OCI-LY7 (cell line): ENCODE measurements at regions of chr2 and their contacts with region 1.

Region 1: DNA sequence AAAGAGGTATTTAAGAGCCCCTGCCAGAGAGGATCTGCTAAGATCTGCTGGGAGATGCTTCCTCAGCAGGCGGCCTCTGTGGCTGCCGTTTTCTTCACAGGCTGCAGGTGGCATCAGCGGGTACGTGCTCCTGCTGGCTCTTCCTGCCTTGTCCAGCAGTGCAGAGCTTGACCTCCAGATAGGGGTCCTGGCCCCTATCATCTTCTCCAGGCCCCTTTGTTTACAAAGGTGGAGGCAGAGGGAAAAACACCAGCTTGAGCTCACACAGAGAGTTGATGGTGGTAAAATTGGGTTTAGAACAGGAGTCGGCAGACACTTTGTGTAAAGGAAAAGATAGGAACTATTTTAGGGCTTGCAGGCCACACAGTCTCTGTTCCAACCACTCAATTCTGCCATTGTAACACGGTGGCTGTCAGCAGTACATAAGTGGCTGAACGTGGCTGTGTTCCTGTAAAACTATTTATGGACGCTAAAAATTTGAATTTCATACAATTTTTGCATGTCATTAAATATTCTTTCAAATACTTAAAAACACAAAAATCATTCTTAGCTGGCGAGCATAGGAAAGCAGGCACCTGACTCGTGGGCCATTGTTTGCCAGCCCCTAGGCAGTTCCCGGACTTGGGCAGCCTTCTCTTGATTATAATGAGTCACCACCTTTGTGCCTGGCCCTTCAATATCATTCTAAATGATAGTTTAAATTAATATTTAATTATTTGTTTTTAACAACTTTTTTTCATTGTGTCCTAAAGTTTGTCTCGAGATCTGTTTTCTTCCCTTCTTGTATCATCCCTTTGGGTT is 98.2 kb upstream of the B3GNT7 start:
- DNase-seq: peak; percentile 82
- H3K4me3 ChIP-seq: peak overlapping the region; percentile 35
- H3K27ac ChIP-seq: no peak overlapping the region
- H3K4me1 ChIP-seq: peaks cover 36% of the 10 kb centered on the region
- CTCF ChIP-seq: peak; percentile 89

Region 2: DNA sequence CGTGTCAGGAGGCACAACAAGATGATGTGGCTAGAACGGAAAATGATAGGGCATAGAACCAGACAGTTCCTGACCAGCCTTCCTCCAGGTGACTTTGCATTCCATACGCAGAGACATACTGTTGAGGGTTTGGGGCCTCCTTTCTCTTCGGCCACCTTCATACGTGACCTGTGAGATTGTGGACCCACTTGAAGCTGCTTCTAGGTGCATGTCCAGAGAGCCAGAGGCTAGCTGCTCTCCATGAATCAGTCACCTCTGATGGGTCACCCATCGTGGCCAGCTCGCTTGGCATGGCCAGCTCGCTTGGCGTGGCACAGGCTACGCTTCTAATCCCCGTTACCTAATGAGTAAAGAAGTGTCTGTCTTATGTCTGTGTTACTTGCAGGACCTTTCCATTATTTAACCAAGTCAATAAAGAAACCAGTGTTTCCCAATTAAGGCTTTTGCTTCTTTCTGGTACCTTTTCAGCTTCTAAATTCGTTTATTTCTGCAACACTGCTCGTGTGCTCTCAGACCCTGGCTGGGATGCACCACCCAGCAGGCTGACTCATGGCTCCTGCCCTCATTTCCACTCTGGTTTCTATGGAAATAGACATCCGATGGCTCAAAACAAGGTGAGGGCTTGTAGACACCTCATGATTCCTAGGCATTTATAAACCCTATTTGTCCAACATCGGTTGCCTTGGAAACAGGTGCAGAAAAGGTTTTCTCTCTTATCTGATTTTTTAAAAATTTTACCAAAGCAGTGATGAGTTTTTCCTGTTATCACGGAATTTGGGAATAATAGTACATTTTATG is 11.5 kb after region 1 on chr2:
- CTCF ChIA-PET with region 1: no interaction called
- POLR2A ChIA-PET with region 1: interaction called, 4 read pairs
- intact Hi-C with region 1: loop called (anchors 2 kb)
- DNase-seq: no peak
- H3K4me3 ChIP-seq: no peak overlapping the region
- H3K27ac ChIP-seq: no peak overlapping the region
- H3K4me1 ChIP-seq: peaks cover 31% of the 10 kb centered on the region
- CTCF ChIP-seq: no peak

Region 3: GRCh38 chr2:231399853-231400680 is 102.8 kb after region 1 on chr2:
- CTCF ChIA-PET with region 1: interaction called, 8 read pairs
- POLR2A ChIA-PET with region 1: no interaction called
- intact Hi-C with region 1: loop called (anchors 1 kb)
- DNase-seq: no peak
- H3K4me3 ChIP-seq: no peak overlapping the region
- H3K27ac ChIP-seq: no peak overlapping the region
- H3K4me1 ChIP-seq: peaks cover 21% of the 10 kb centered on the region
- CTCF ChIP-seq: no peak

Region 4: GRCh38 chr2:231761735-231762134 is 464.4 kb after region 1 on chr2:
- CTCF ChIA-PET with region 1: no interaction called
- POLR2A ChIA-PET with region 1: interaction called, 14 read pairs
- intact Hi-C with region 1: no loop called
- DNase-seq: no peak
- H3K4me3 ChIP-seq: no peak overlapping the region
- H3K27ac ChIP-seq: no peak overlapping the region
- H3K4me1 ChIP-seq: no peaks in the 10 kb centered on the region
- CTCF ChIP-seq: no peak